ENCODE measurements at regions of chr3 and their contacts with region 1.

Region 1: DNA sequence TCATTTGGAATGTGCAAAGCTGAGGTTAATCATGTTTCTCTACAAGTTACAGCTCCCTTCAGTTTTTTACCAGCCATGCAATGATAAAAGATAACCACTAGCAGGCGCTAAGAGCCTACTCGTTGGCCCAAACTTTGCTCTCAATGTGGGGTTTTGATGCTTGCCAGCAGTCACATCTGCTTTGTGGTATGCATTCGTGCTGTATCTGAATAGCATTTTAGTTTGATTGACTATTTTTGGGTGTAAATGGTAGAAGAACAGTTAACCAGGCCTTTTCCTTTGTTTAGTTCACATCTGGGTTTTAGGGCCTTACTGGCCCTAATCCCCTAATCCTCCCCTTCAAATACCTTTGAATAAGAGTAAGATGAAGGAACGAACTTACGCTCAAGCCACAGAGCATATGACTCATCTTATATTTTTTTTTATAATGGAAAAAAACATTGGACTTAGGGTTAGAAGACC is 4.4 kb upstream of the CLDN11 start:
- DNase-seq: peak; percentile 41
- ATAC-seq: peak; percentile 42
- H3K4me3 Mint-ChIP-seq: no peak overlapping the region
- H3K27ac Mint-ChIP-seq: no peak overlapping the region
- H3K4me1 Mint-ChIP-seq: peaks cover 15% of the 10 kb centered on the region
- H3K27me3 Mint-ChIP-seq: peaks cover 30% of the 10 kb centered on the region
- CTCF ChIP-seq: peak; percentile 87

Region 2: GRCh38 chr3:170397579-170398177 is 16.6 kb before region 1 on chr3:
- CTCF ChIA-PET with region 1: interaction called, 17 read pairs
- POLR2A ChIA-PET with region 1: no interaction called
- DNase-seq: no peak
- ATAC-seq: no peak; the same call in 1 of the 2 replicates
- H3K4me3 Mint-ChIP-seq: no peak overlapping the region
- H3K27ac Mint-ChIP-seq: peak overlapping the region; percentile 29; the same call in 1 of the 2 replicates
- H3K4me1 Mint-ChIP-seq: no peaks in the 10 kb centered on the region
- H3K27me3 Mint-ChIP-seq: no peaks in the 10 kb centered on the region
- CTCF ChIP-seq: no peak

Region 3: GRCh38 chr3:170431054-170431453 is 16.8 kb after region 1 on chr3:
- CTCF ChIA-PET with region 1: interaction called, 17 read pairs
- POLR2A ChIA-PET with region 1: interaction called, 3 read pairs
- DNase-seq: no peak
- ATAC-seq: no peak
- H3K4me3 Mint-ChIP-seq: no peak overlapping the region
- H3K27ac Mint-ChIP-seq: no peak overlapping the region
- H3K4me1 Mint-ChIP-seq: peaks cover 8% of the 10 kb centered on the region
- H3K27me3 Mint-ChIP-seq: no peaks in the 10 kb centered on the region
- CTCF ChIP-seq: no peak

Region 4: DNA sequence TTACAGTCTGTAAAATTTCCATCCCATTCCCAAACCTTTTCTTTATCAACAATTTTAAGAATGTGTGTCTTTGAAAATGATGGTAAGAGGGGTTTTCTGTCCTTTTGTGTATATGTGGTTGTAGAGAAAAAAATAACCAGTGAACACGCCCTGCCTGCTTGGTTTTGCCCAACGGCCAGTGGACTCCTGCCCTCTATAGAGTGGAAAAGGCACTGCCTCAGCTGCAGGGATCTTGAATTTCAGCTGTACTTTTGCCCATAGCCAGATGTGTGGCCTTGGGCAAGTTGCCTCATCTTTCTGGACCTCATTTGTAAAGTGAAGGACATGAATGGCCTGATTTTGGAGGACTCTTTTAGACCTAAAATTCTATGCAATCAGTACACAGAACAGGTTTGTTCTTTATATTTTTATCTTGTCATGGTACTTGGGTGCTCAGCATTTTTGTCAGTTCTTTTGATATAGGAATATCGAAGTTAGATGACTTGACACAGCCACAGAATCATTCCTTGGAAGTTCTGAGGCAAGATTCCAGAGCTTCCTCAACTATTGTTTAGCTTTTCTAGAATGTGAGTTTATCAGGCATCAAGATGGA is 85.4 kb after region 1 on chr3:
- CTCF ChIA-PET with region 1: interaction called, 39 read pairs
- POLR2A ChIA-PET with region 1: no interaction called
- DNase-seq: peak; percentile 47
- ATAC-seq: peak; percentile 89
- H3K4me3 Mint-ChIP-seq: no peak overlapping the region
- H3K27ac Mint-ChIP-seq: no peak overlapping the region
- H3K4me1 Mint-ChIP-seq: no peaks in the 10 kb centered on the region
- H3K27me3 Mint-ChIP-seq: no peaks in the 10 kb centered on the region
- CTCF ChIP-seq: peak; percentile 46; the same call in 1 of the 2 replicates

Region 5: GRCh38 chr3:170689893-170690660 is 275.8 kb after region 1 on chr3:
- CTCF ChIA-PET with region 1: interaction called, 20 read pairs
- POLR2A ChIA-PET with region 1: no interaction called
- DNase-seq: peak; percentile 79
- ATAC-seq: peak; percentile 78
- H3K4me3 Mint-ChIP-seq: no peak overlapping the region
- H3K27ac Mint-ChIP-seq: no peak overlapping the region; the same call in 1 of the 2 replicates
- H3K4me1 Mint-ChIP-seq: peaks cover 31% of the 10 kb centered on the region
- H3K27me3 Mint-ChIP-seq: peaks cover 10% of the 10 kb centered on the region; the same call in 1 of the 2 replicates
- CTCF ChIP-seq: peak; percentile 82

Region 6: GRCh38 chr3:170848292-170848917 is 434.2 kb after region 1 on chr3:
- CTCF ChIA-PET with region 1: interaction called, 12 read pairs
- POLR2A ChIA-PET with region 1: no interaction called
- DNase-seq: no peak
- ATAC-seq: no peak
- H3K4me3 Mint-ChIP-seq: no peak overlapping the region
- H3K27ac Mint-ChIP-seq: no peak overlapping the region
- H3K4me1 Mint-ChIP-seq: no peaks in the 10 kb centered on the region
- H3K27me3 Mint-ChIP-seq: no peaks in the 10 kb centered on the region; the same call in 1 of the 2 replicates
- CTCF ChIP-seq: no peak

Region 7: DNA sequence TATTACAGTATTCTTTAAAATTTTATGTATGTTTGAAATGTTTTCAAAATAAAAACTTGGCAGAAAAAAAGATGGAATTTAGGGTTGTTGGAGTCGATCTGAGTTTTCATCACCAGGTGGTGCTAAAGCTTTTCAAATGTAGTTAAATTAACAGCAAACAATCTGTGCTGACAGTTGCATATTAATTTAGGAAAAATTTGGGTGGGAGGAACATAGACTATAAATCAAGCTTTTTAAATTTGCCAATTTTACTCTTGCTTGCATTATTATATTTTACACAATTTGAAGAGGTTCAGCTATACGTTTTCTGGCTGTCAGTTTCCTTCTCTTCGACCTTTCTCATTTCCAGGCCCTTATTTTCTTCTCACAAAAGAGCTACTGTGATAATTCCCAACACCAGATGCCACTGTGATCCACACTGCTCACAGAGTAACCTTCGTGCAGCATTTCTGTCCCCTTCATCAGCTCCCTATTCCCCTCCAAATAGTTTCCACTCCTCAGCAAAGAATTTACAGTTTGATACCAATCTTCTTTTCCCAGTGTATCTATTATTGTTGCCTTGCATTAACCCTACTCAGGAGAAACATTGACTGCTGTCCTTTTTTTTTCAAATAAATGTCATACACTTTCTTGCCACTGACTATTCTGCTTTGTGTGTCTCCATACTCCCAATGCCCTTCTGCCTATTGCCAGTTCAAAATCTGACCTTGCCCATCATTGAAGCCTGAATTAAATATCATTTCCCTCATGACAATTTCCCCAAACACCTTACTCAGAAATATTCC is 547.6 kb after region 1 on chr3:
- CTCF ChIA-PET with region 1: no interaction called
- POLR2A ChIA-PET with region 1: no interaction called
- DNase-seq: no peak
- ATAC-seq: no peak; the same call in 1 of the 2 replicates
- H3K4me3 Mint-ChIP-seq: no peak overlapping the region
- H3K27ac Mint-ChIP-seq: no peak overlapping the region
- H3K4me1 Mint-ChIP-seq: no peaks in the 10 kb centered on the region
- H3K27me3 Mint-ChIP-seq: no peaks in the 10 kb centered on the region
- CTCF ChIP-seq: peak; percentile 28; the same call in 1 of the 2 replicates

Measured in WTC11 (cell line).